Endothelial cell of umbilical vein (primary cell): ENCODE measurements at regions of chr12 and their contacts with region 1.

Region 1: GRCh38 chr12:49503674-49504180 is 35.1 kb upstream of the KCNH3 start:
- DNase-seq: peak; percentile 94
- H3K4me3 ChIP-seq: peak overlapping the region in 1 of 3 experiments; percentile 21
- H3K27ac ChIP-seq: peak overlapping the region; percentile 86
- H3K4me1 ChIP-seq: peaks cover 68% of the 10 kb centered on the region
- H3K27me3 ChIP-seq: no peaks in the 10 kb centered on the region
- CTCF ChIP-seq: no peak
- POLR2A ChIP-seq: no peak

Region 2: DNA sequence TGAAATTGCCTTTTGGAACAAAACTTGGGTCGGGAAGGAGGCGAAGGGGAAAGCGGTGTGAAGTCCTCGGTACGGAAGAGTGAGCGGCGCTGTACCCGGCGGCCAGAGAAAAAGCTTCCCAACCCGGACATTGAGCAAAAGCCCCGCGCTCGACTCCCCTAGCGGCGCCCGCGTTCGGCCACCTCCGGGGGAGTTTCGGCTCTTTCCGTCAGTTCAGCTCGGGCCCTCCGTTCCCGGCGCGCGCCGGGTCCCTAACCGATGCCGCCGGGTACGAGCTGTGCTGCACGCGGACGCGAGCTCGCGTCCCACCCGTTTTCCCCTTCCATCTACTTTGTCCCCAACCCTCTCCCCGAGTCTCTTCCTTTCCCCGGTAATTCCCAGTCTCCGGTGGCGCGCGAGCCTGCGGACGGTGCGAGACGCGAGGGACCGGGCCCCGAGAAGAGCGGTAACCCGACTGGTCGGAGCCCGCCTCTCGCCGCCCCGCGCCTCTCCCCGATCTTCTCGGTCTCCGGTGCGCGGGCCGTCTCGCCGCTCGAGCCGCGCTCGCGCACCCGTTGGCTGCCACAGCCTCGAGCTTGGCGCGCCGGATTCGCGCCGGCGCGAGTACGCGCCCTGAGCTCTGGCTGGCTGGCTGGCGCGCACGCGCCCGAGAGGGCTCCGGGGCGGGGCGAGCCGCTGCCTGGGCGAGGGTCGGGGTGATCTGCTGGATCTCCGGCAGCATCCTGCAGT is 136.9 kb before region 1 on chr12:
- CTCF ChIA-PET with region 1: interaction called, 13 read pairs
- POLR2A ChIA-PET with region 1: interaction called, 14 read pairs
- dilution Hi-C with region 1: loop called (anchors 25 kb)
- intact Hi-C with region 1: no loop called
- DNase-seq: peak; percentile 97
- H3K4me3 ChIP-seq: peak overlapping the region; percentile 76 to 94 (median 85)
- H3K27ac ChIP-seq: peak overlapping the region; percentile 77
- H3K4me1 ChIP-seq: peaks cover 35% of the 10 kb centered on the region
- H3K27me3 ChIP-seq: no peaks in the 10 kb centered on the region
- CTCF ChIP-seq: peak in 1 of 2 donors; percentile 44
- POLR2A ChIP-seq: peak; percentile 46

Region 3: GRCh38 chr12:49462083-49462744 is 41.5 kb before region 1 on chr12:
- CTCF ChIA-PET with region 1: interaction called, 4 read pairs
- POLR2A ChIA-PET with region 1: interaction called, 3 read pairs
- dilution Hi-C with region 1: no loop called
- intact Hi-C with region 1: loop called (anchors 1 kb)
- DNase-seq: peak; percentile 47
- H3K4me3 ChIP-seq: no peak overlapping the region
- H3K27ac ChIP-seq: peak overlapping the region; percentile 20
- H3K4me1 ChIP-seq: peaks cover 29% of the 10 kb centered on the region
- H3K27me3 ChIP-seq: no peaks in the 10 kb centered on the region
- CTCF ChIP-seq: no peak
- POLR2A ChIP-seq: no peak

Region 4: DNA sequence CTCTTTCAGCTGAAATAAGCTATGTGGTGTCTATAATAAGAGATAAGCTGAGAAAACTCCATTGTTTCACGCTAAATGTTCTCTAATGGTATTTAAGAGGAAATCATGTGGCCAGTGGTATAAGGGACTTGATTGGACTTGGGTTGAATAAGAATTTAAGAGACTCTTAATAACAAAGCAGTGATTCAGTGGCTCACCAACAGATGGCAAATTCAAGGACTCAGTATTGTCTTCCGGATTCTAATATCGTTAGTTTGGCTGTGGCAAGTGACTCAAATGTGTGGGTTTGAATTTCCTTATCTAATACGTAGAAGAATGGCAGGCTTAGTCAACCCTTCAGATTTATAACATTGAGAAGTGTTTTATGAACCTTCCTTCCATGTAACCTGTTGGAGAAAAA is 14.0 kb before region 1 on chr12:
- CTCF ChIA-PET with region 1: interaction called, 16 read pairs
- POLR2A ChIA-PET with region 1: no interaction called
- dilution Hi-C with region 1: no loop called
- intact Hi-C with region 1: loop called (anchors 1 kb)
- DNase-seq: peak; percentile 93
- H3K4me3 ChIP-seq: no peak overlapping the region
- H3K27ac ChIP-seq: peak overlapping the region; percentile 81
- H3K4me1 ChIP-seq: peaks cover 23% of the 10 kb centered on the region
- H3K27me3 ChIP-seq: no peaks in the 10 kb centered on the region
- CTCF ChIP-seq: peak in 1 of 2 donors; percentile 32
- POLR2A ChIP-seq: no peak